ENCODE measurements at regions of chr1 and their contacts with region 1.

Region 1: DNA sequence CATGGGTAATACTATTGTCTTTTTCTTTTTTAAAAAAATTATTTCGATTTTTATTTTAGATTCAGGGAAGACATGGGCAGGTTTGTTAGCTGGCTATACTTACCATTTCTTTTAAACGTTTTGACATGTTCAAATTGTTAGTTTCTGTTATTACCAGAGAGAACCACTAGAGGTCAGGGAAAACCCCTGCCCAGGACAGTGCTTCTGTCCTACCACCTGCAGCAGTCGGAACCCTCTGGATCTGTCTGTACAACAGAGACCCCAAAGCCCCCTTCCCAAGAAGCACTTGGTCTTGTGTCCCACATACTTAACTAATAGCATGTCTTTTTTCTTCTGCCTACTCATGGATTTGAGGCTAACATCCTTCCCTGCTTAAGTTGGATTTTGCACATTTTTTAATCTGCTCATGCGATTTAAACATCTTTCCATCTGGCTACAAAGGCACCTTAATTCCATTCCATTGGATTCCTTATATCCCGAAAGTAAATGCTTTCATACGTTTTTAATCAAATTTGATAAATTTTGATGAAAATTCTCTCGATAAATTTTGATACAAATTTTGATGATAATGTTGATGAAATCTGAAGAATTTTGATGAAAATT is 10.0 kb upstream of the C1orf115 start:
- DNase-seq: peak; percentile 29 to 37
- H3K4me3 ChIP-seq: no peak overlapping the region
- H3K27ac ChIP-seq: no peak overlapping the region
- H3K4me1 ChIP-seq: no peaks in the 10 kb centered on the region
- H3K27me3 ChIP-seq: no peaks in the 10 kb centered on the region
- CTCF ChIP-seq: peak; percentile 50 to 80 (median 78)
- POLR2A ChIP-seq: no peak

Region 2: GRCh38 chr1:220741825-220742224 is 61.6 kb after region 1 on chr1:
- intact Hi-C with region 1: no loop called
- DNase-seq: no peak
- H3K4me3 ChIP-seq: no peak overlapping the region
- H3K27ac ChIP-seq: no peak overlapping the region
- H3K4me1 ChIP-seq: no peaks in the 10 kb centered on the region
- H3K27me3 ChIP-seq: no peaks in the 10 kb centered on the region
- CTCF ChIP-seq: no peak
- POLR2A ChIP-seq: no peak

Region 3: DNA sequence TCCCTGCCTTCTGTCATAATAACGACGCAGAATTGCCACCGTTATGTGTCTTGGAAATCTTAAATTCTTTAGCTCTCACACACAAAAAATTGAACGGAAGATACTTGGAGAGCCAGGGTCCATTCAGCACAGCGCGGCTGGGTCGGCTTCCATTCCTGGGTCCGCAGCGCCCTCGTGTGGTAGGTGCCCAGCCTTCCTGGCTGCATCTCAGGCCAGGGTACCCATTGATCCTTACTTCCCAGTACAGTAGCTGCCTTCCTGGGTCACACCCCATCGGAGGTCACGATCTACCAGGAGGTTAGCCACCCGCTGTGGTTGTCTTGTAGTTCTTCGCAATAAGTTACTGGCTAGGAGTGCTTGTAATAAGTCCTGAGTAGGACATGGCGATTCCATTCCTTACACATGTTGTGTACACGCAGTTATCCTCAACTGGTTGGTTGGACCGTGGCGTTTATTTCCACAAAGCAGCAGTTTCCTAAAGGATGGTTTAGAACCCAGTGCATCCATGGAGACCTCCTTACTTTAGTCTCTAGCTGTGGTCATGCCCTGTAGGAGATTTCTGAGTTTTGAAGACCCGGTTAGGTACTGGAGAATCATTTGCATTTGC is 96.6 kb after region 1 on chr1:
- intact Hi-C with region 1: loop called (anchors 5 kb)
- DNase-seq: peak; percentile 80 to 83
- H3K4me3 ChIP-seq: no peak overlapping the region
- H3K27ac ChIP-seq: no peak overlapping the region
- H3K4me1 ChIP-seq: no peaks in the 10 kb centered on the region
- H3K27me3 ChIP-seq: no peaks in the 10 kb centered on the region
- CTCF ChIP-seq: peak; percentile 53 to 89 (median 84)
- POLR2A ChIP-seq: no peak

Measured in thyroid gland (tissue), 4 donors.